Panc1 (cell line): ENCODE measurements at regions of chr7 and their contacts with region 1.

Region 1: DNA sequence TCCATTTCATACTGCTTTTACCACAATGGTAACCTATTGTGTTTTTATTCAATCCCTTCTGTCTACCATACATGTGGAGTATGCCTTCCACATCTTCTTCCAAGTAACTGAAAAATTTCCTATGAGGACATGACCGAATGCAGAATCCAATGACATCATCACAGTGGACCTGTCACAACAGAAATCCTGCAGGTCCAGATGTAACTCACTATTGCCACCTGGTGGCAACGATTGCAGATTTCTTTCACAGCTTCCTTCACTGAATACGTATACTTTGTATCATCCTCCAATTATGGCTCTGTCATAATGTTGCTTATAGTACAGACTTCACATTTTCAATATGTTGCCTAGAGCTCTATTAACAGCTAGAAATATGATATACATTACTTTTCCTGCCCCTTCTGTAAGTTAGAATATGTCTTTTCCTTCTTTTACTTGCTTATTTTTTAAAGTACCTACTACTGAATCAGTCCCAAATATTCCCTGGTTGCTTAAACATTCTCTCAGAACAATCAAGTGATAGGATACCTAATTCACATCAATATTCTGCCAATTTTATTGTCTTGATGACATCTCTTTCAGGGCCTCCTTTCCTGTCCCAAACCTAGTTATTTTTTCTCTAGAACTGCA is 45.4 kb downstream of the SLC13A1 start:
- DNase-seq: peak; percentile 75
- ATAC-seq: peak; percentile 86
- H3K4me3 ChIP-seq: no peak overlapping the region
- H3K27ac ChIP-seq: no peak overlapping the region
- H3K4me1 ChIP-seq: no peaks in the 10 kb centered on the region
- H3K27me3 ChIP-seq: no peaks in the 10 kb centered on the region
- CTCF ChIP-seq: peak; percentile 75

Region 2: GRCh38 chr7:121366852-121367431 is 1787.4 kb before region 1 on chr7:
- CTCF ChIA-PET with region 1: no interaction called
- POLR2A ChIA-PET with region 1: interaction called, 18 read pairs
- in situ Hi-C with region 1: no loop called
- intact Hi-C with region 1: no loop called
- DNase-seq: peak; percentile 30
- ATAC-seq: no peak
- H3K4me3 ChIP-seq: no peak overlapping the region
- H3K27ac ChIP-seq: no peak overlapping the region
- H3K4me1 ChIP-seq: no peaks in the 10 kb centered on the region; the same call in none of the 2 replicates
- H3K27me3 ChIP-seq: no peaks in the 10 kb centered on the region
- CTCF ChIP-seq: peak; percentile 75; the same call in 1 of the 2 replicates

Region 3: DNA sequence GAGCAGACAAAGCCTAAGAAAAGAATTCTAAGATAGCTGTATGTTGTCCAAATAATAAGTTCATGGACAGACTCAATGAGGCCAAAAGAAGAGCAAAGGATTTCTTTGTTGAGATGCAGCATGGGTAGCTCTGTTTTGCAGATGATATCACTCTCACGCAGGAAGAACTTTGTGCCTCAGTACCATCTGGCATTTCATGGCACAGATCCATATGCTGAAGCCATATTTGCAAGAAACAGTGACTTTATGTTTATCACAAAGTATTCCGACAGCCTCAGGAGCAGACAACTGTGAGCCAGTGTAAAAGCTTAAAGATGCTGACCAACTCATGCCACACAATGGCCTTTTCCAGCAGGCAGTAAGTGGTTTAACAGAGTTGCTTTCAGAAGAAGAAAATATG is 406.2 kb before region 1 on chr7:
- CTCF ChIA-PET with region 1: no interaction called
- POLR2A ChIA-PET with region 1: no interaction called
- in situ Hi-C with region 1: no loop called
- intact Hi-C with region 1: no loop called
- DNase-seq: no peak
- ATAC-seq: no peak
- H3K4me3 ChIP-seq: no peak overlapping the region
- H3K27ac ChIP-seq: no peak overlapping the region
- H3K4me1 ChIP-seq: no peaks in the 10 kb centered on the region
- H3K27me3 ChIP-seq: no peaks in the 10 kb centered on the region
- CTCF ChIP-seq: no peak

Region 4: GRCh38 chr7:122803323-122803722 is 351.0 kb before region 1 on chr7:
- CTCF ChIA-PET with region 1: no interaction called
- POLR2A ChIA-PET with region 1: no interaction called
- in situ Hi-C with region 1: no loop called
- intact Hi-C with region 1: loop called (anchors 10 kb)
- DNase-seq: no peak
- ATAC-seq: no peak
- H3K4me3 ChIP-seq: no peak overlapping the region
- H3K27ac ChIP-seq: no peak overlapping the region
- H3K4me1 ChIP-seq: no peaks in the 10 kb centered on the region
- H3K27me3 ChIP-seq: no peaks in the 10 kb centered on the region
- CTCF ChIP-seq: peak; percentile 26; the same call in 1 of the 2 replicates

Region 5: GRCh38 chr7:122886357-122887081 is 267.8 kb before region 1 on chr7 and contains the start of gene CADPS2:
- CTCF ChIA-PET with region 1: no interaction called
- POLR2A ChIA-PET with region 1: no interaction called
- in situ Hi-C with region 1: no loop called
- intact Hi-C with region 1: loop called (anchors 5 kb)
- DNase-seq: no peak
- ATAC-seq: peak; percentile 90
- H3K4me3 ChIP-seq: peak within 1 kb of the TSS; percentile 54 to 56
- H3K27ac ChIP-seq: no peak within 1 kb of the TSS
- H3K4me1 ChIP-seq: no peaks in the 10 kb centered on the region; the same call in 1 of the 2 replicates
- H3K27me3 ChIP-seq: peaks cover 27% of the 10 kb centered on the region
- CTCF ChIP-seq: no peak
- total RNA-seq, gene CADPS2: 1.6 TPM